Endothelial cell of umbilical vein (primary cell): ENCODE measurements at regions of chr15 and their contacts with region 1.

Region 1: DNA sequence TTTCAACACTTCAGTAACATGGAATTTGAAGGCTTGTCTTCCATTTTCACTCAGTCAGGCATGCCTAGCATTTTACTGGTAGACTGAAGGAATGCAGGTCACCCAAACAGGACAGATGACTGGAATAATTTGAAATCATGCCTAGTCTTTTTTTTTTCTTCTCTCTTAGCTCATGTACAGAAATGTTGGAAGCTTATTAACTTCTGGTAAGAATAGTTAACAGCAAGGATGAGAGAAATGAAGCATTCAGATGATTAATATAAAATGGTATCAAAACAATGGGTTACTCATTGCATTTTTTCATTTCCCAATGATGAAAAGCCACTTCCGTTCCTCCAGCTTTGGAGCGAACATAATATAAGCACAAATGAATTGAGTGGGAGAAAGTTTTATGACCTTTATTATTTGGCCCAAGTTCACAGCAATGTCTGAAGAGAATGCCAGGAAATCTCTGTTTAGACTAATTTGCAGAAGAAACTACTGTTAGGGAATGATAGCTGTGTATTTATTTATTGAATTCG is 431.6 kb upstream of the RASGRP1 start:
- DNase-seq: peak; percentile 96
- H3K4me3 ChIP-seq: no peak overlapping the region
- H3K27ac ChIP-seq: peak overlapping the region; percentile 92
- H3K4me1 ChIP-seq: peaks cover 51% of the 10 kb centered on the region
- H3K27me3 ChIP-seq: no peaks in the 10 kb centered on the region
- CTCF ChIP-seq: no peak
- POLR2A ChIP-seq: peak; percentile 35

Region 2: GRCh38 chr15:38508647-38509046 is 487.5 kb before region 1 on chr15:
- CTCF ChIA-PET with region 1: no interaction called
- POLR2A ChIA-PET with region 1: no interaction called
- dilution Hi-C with region 1: no loop called
- intact Hi-C with region 1: no loop called
- DNase-seq: no peak
- H3K4me3 ChIP-seq: no peak overlapping the region
- H3K27ac ChIP-seq: no peak overlapping the region
- H3K4me1 ChIP-seq: no peaks in the 10 kb centered on the region
- H3K27me3 ChIP-seq: peaks cover 5 to 9% of the 10 kb centered on the region in 2 experiments
- CTCF ChIP-seq: no peak
- POLR2A ChIP-seq: no peak

Region 3: DNA sequence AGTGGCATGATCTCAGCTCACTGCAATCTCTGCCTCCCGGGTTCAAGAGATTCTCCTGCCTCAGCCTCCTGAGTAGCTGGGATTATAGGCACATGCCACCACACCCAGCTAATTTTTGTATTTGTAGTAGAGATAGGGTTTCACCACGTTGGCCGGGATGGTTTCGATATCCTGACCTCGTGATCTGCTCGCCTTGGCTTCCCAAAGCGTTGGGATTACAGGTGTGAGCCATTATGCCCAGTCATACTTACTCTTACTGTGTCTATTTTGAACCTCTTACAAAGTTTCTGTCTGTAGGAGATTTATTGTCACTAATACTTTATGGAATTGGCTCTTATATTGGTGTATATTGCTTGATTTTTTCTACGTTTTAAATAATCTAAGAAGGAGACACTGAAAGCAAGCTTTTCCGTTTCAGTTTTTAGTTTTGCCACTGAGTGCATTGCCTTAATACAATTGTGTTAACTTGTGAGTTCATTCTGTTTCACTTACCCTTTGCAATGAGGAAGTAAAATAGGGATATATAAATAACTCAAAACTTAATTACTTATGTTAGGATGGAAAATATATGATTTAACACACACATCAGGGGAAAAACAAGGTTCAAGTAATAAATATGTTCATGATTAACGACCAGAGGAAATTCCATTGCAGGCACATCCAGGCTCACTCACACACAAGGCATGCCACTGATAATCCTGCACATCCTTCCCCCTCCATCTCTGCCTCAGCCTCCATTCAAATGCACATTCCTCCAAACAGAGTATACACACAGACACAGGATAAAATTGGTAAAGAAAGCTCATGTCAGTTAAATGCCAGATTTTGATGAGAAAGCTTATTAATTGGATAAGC is 152.2 kb before region 1 on chr15:
- CTCF ChIA-PET with region 1: interaction called, 40 read pairs
- POLR2A ChIA-PET with region 1: interaction called, 19 read pairs
- dilution Hi-C with region 1: no loop called
- intact Hi-C with region 1: loop called (anchors 1 kb)
- DNase-seq: peak; percentile 95
- H3K4me3 ChIP-seq: peak overlapping the region in 1 of 3 experiments; percentile 15
- H3K27ac ChIP-seq: peak overlapping the region; percentile 98
- H3K4me1 ChIP-seq: peaks cover 41% of the 10 kb centered on the region
- H3K27me3 ChIP-seq: no peaks in the 10 kb centered on the region
- CTCF ChIP-seq: no peak
- POLR2A ChIP-seq: peak; percentile 61

Region 4: GRCh38 chr15:38954090-38954489 is 42.1 kb before region 1 on chr15:
- CTCF ChIA-PET with region 1: no interaction called
- POLR2A ChIA-PET with region 1: no interaction called
- dilution Hi-C with region 1: no loop called
- intact Hi-C with region 1: no loop called
- DNase-seq: no peak
- H3K4me3 ChIP-seq: no peak overlapping the region
- H3K27ac ChIP-seq: no peak overlapping the region
- H3K4me1 ChIP-seq: no peaks in the 10 kb centered on the region
- H3K27me3 ChIP-seq: no peaks in the 10 kb centered on the region
- CTCF ChIP-seq: no peak
- POLR2A ChIP-seq: no peak

Region 5: GRCh38 chr15:39084683-39085530 is 88.7 kb after region 1 on chr15:
- CTCF ChIA-PET with region 1: no interaction called
- POLR2A ChIA-PET with region 1: no interaction called
- dilution Hi-C with region 1: no loop called
- intact Hi-C with region 1: no loop called
- DNase-seq: no peak
- H3K4me3 ChIP-seq: no peak overlapping the region
- H3K27ac ChIP-seq: peak overlapping the region; percentile 57
- H3K4me1 ChIP-seq: peaks cover 3% of the 10 kb centered on the region
- H3K27me3 ChIP-seq: no peaks in the 10 kb centered on the region
- CTCF ChIP-seq: no peak
- POLR2A ChIP-seq: no peak

Region 6: DNA sequence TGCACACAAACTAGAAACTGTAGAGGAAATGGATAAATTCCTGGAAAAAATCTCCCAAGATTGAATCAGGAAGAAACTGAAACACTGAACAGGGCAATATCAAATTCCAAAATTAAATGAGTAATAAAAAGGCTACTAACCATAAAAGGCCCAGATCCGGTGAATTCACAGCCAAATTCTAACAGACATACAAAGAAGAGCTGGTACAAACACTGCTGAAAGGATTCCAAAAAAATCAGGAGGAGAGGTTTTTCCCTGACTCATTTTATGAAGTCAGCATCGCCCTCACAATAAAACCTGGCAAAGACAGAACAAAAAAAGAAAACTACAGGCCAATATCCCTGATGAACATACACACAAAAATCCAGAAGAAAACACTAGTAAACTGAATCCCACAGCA is 122.3 kb after region 1 on chr15:
- CTCF ChIA-PET with region 1: interaction called, 6 read pairs
- POLR2A ChIA-PET with region 1: no interaction called
- dilution Hi-C with region 1: no loop called
- intact Hi-C with region 1: loop called (anchors 2 kb)
- DNase-seq: peak; percentile 81
- H3K4me3 ChIP-seq: peak overlapping the region in 1 of 3 experiments; percentile 19
- H3K27ac ChIP-seq: peak overlapping the region; percentile 74
- H3K4me1 ChIP-seq: peaks cover 16% of the 10 kb centered on the region
- H3K27me3 ChIP-seq: no peaks in the 10 kb centered on the region
- CTCF ChIP-seq: no peak
- POLR2A ChIP-seq: no peak

Region 7: GRCh38 chr15:39140060-39140604 is 144.0 kb after region 1 on chr15:
- CTCF ChIA-PET with region 1: no interaction called
- POLR2A ChIA-PET with region 1: interaction called, 3 read pairs
- dilution Hi-C with region 1: no loop called
- intact Hi-C with region 1: loop called (anchors 1 kb)
- DNase-seq: peak; percentile 100
- H3K4me3 ChIP-seq: no peak overlapping the region
- H3K27ac ChIP-seq: peak overlapping the region; percentile 96
- H3K4me1 ChIP-seq: peaks cover 34% of the 10 kb centered on the region
- H3K27me3 ChIP-seq: no peaks in the 10 kb centered on the region
- CTCF ChIP-seq: no peak
- POLR2A ChIP-seq: peak; percentile 90

Region 8: GRCh38 chr15:39248204-39248603 is 252.0 kb after region 1 on chr15:
- CTCF ChIA-PET with region 1: no interaction called
- POLR2A ChIA-PET with region 1: no interaction called
- dilution Hi-C with region 1: no loop called
- intact Hi-C with region 1: loop called (anchors 5 kb)
- DNase-seq: peak; percentile 99
- H3K4me3 ChIP-seq: peak overlapping the region in 1 of 3 experiments; percentile 0
- H3K27ac ChIP-seq: peak overlapping the region; percentile 98
- H3K4me1 ChIP-seq: peaks cover 72% of the 10 kb centered on the region
- H3K27me3 ChIP-seq: no peaks in the 10 kb centered on the region
- CTCF ChIP-seq: no peak
- POLR2A ChIP-seq: no peak

Region 9: GRCh38 chr15:39287322-39288195 is 291.4 kb after region 1 on chr15:
- CTCF ChIA-PET with region 1: no interaction called
- POLR2A ChIA-PET with region 1: no interaction called
- dilution Hi-C with region 1: no loop called
- intact Hi-C with region 1: no loop called
- DNase-seq: peak; percentile 72
- H3K4me3 ChIP-seq: no peak overlapping the region
- H3K27ac ChIP-seq: peak overlapping the region; percentile 52
- H3K4me1 ChIP-seq: peaks cover 26% of the 10 kb centered on the region
- H3K27me3 ChIP-seq: no peaks in the 10 kb centered on the region
- CTCF ChIP-seq: no peak
- POLR2A ChIP-seq: no peak